ENCODE measurements at regions of chr14 and their contacts with region 1.

Region 1: GRCh38 chr14:96100161-96101029 is 61.2 kb downstream of the C14orf132 start:
- DNase-seq: peak; percentile 4
- H3K4me3 Mint-ChIP-seq: no peak overlapping the region
- H3K27ac Mint-ChIP-seq: no peak overlapping the region
- H3K4me1 Mint-ChIP-seq: no peaks in the 10 kb centered on the region
- H3K27me3 Mint-ChIP-seq: no peaks in the 10 kb centered on the region

Region 2: DNA sequence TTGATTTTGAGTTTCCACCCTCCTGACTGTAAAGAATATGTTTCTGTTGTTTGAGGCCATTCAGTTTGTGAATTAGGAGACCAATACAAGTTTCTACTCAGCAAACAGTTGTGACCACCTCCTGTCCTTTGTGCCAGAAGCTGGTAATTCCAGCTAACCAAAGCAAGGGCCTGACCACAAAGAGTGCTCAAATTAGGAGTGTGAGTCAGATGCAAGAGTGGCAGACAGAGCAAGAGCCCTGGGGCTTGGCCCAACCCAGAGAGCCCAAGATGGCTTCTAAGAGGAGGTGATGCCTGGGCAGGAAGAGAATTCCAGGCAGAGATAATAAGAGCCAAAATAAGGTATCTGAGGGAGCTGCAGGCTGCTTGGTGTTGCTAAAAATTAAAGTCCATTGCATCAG is 138.9 kb before region 1 on chr14:
- intact Hi-C with region 1: no loop called
- DNase-seq: no peak
- H3K4me3 Mint-ChIP-seq: no peak overlapping the region
- H3K27ac Mint-ChIP-seq: no peak overlapping the region
- H3K4me1 Mint-ChIP-seq: no peaks in the 10 kb centered on the region
- H3K27me3 Mint-ChIP-seq: no peaks in the 10 kb centered on the region

Region 3: DNA sequence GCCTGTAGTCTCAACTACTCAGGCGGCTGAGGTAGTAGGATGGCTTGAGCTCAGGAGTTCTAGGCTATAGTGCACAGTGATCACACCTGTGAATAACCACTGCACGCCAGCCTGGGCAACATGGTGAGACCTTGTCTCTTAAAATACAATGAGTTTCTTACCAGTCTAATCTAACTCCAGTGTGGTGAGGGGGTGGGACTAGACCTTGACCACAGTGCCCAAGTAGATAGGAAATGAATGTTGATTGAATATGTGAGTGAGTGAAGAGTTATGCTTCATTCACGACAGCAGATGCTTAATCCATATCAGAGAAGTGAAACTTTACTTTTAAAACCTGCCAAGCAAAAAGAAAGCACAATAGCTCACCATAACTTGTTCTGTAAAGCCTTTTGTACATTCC is 280.3 kb after region 1 on chr14:
- intact Hi-C with region 1: no loop called
- DNase-seq: no peak
- H3K4me3 Mint-ChIP-seq: no peak overlapping the region
- H3K27ac Mint-ChIP-seq: no peak overlapping the region
- H3K4me1 Mint-ChIP-seq: peaks cover 6% of the 10 kb centered on the region
- H3K27me3 Mint-ChIP-seq: no peaks in the 10 kb centered on the region

Region 4: DNA sequence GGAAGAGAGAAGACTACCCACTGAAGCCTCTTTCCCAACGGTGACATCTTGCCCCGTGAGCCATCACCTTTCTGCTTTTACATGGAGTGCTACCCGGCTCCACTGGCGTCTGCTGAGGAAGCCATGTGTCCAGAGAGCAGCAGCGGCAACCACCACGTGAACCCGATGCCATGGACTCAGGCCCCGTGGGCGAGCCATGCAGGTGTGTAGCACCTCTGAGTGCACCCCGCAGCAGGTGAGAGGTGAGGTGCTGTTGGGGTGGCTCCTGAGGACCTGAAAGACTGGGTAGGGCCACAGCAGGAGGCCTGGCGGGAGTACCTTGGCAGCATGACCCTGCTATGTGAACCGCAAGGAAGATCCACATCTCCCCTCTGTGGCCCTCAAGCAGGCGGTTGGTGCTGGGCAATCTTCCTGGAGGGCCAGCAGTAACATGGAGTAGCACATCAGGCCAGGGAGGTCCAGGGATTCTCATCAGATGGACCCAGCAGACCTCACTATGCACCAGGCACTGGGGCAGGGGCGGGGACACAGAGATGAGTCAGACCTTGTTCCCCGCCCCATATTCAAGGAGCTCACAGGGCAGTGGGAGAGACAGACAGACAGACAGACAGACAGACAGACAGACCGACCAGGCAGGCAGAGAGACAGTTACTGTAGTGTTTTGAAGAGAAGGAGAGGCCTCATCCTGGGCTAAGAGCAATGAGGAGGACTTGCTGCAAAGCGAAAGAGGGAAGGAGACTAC is 531.4 kb after region 1 on chr14:
- intact Hi-C with region 1: loop called (anchors 5 kb)
- DNase-seq: no peak
- H3K4me3 Mint-ChIP-seq: no peak overlapping the region
- H3K27ac Mint-ChIP-seq: no peak overlapping the region
- H3K4me1 Mint-ChIP-seq: no peaks in the 10 kb centered on the region
- H3K27me3 Mint-ChIP-seq: peaks cover 4% of the 10 kb centered on the region